ENCODE measurements at regions of chr5 and their contacts with region 1.

Region 1: DNA sequence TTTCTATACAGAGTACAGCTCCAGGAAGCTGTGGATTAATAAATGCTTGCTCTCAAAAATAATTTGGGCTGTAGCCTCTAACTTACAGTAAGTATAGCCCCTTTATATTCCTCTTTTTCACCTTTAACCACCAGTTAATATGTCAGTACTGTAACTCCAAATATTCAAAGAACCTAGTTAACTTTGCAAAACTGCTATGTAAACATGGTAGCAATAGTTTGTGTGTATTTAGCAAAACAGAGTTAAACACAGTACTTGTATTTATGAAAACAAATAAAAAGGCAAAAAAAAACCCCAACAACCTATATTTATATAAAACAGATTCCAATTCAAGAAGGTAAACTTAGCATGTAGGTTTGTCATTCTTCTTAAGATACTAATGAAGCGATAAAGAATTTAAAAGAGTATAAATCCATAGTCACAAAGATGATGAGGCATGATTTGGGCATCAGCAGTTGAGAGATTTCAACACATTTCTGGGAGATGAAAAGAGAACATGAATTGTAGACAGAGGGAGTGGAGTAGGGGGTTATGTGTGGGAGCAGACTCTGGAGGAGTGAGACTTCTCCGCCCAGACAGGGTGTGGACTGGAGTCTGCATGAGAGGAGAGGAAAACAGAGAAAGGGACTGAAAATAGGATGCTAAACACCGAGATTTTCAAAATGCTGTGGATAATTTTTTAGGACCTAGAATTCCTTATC is 47.0 kb upstream of the F2RL1 start:
- DNase-seq: no peak
- ATAC-seq: no peak
- H3K4me3 Mint-ChIP-seq: no peak overlapping the region
- H3K27ac Mint-ChIP-seq: no peak overlapping the region
- H3K4me1 Mint-ChIP-seq: peaks cover 2% of the 10 kb centered on the region
- H3K27me3 Mint-ChIP-seq: no peaks in the 10 kb centered on the region

Region 2: GRCh38 chr5:76601470-76601869 is 170.4 kb before region 1 on chr5:
- CTCF ChIA-PET with region 1: interaction called, 112 read pairs
- POLR2A ChIA-PET with region 1: no interaction called
- intact Hi-C with region 1: loop called (anchors 1 kb)
- DNase-seq: peak; percentile 18
- ATAC-seq: no peak
- H3K4me3 Mint-ChIP-seq: no peak overlapping the region
- H3K27ac Mint-ChIP-seq: no peak overlapping the region
- H3K4me1 Mint-ChIP-seq: peaks cover 9% of the 10 kb centered on the region
- H3K27me3 Mint-ChIP-seq: no peaks in the 10 kb centered on the region

Region 3: DNA sequence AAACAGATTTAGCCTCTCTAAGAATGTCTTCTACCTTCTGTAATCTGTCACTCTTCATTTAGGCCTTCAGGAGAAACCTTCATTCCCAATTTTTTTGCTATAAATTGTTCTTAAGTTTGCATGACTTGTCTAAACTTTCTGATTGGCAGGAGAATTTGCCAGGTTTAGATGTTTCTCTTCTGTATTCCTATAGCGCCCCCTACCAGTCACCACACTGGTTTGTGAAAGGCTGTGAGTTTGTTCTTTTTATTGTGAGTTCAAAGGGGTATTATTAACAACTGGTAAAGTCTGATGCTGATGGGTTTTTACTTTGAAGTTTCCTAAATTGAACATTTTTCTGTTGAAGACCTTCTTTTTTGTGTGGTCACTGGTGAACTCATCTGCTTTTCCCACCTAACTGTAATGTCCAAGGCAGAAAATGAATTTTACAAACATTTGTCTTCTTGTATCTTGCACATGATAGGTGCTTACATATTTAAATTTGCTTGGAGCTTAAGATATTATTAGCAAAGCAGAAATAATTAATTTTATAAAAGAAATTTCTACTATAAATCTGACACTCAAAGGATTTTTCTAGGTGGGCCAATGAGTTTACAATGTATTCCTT is 130.2 kb before region 1 on chr5:
- CTCF ChIA-PET with region 1: interaction called, 7 read pairs
- POLR2A ChIA-PET with region 1: no interaction called
- intact Hi-C with region 1: loop called (anchors 1 kb)
- DNase-seq: peak; percentile 74
- ATAC-seq: no peak
- H3K4me3 Mint-ChIP-seq: no peak overlapping the region
- H3K27ac Mint-ChIP-seq: no peak overlapping the region
- H3K4me1 Mint-ChIP-seq: peaks cover 5% of the 10 kb centered on the region
- H3K27me3 Mint-ChIP-seq: no peaks in the 10 kb centered on the region

Region 4: DNA sequence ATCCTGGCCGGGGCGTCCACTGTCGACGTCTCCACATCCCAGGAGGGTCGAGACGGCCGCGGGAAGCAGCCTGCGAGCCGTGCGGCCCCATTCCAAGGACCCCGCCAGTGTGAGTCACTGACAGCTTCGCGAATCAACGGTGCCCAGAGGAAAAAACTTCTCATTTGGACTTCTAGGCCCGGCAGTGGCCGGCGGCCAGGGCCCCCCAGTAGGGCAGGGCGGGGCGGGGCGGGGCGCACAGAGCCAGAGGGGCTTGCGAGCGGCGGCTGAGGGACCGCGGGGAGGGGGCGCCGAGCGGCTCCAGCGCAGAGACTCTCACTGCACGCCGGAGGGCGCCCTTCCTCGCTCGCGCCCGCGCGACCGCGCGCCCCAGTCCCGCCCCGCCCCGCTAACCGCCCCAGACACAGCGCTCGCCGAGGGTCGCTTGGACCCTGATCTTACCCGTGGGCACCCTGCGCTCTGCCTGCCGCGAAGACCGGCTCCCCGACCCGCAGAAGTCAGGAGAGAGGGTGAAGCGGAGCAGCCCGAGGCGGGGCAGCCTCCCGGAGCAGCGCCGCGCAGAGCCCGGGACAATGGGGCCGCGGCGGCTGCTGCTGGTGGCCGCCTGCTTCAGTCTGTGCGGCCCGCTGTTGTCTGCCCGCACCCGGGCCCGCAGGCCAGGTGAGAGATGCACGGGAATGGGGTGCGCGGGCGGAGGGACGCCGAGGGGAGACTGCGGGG is 56.0 kb before region 1 on chr5 and contains the start of gene F2R:
- CTCF ChIA-PET with region 1: interaction called, 45 read pairs
- POLR2A ChIA-PET with region 1: no interaction called
- intact Hi-C with region 1: loop called (anchors 1 to 5 kb)
- DNase-seq: peak; percentile 72
- ATAC-seq: peak; percentile 79
- H3K4me3 Mint-ChIP-seq: peak within 1 kb of the TSS; percentile 75
- H3K27ac Mint-ChIP-seq: no peak within 1 kb of the TSS
- H3K4me1 Mint-ChIP-seq: peaks cover 22% of the 10 kb centered on the region
- H3K27me3 Mint-ChIP-seq: peaks cover 38% of the 10 kb centered on the region
- total RNA-seq, gene F2R: 1.4 TPM

Region 5: GRCh38 chr5:76736679-76737556 is 34.9 kb before region 1 on chr5:
- CTCF ChIA-PET with region 1: interaction called, 43 read pairs
- POLR2A ChIA-PET with region 1: no interaction called
- intact Hi-C with region 1: loop called in 1 of 2 experiments (anchors 2 kb)
- DNase-seq: no peak
- ATAC-seq: no peak
- H3K4me3 Mint-ChIP-seq: no peak overlapping the region
- H3K27ac Mint-ChIP-seq: no peak overlapping the region
- H3K4me1 Mint-ChIP-seq: peaks cover 24% of the 10 kb centered on the region
- H3K27me3 Mint-ChIP-seq: no peaks in the 10 kb centered on the region

Measured in activated CD4-positive, alpha-beta T cell treated with anti-CD3 and anti-CD28 coated beads for 36 hours (primary cell).